ENCODE measurements at regions of chr9 and their contacts with region 1.

Region 1: DNA sequence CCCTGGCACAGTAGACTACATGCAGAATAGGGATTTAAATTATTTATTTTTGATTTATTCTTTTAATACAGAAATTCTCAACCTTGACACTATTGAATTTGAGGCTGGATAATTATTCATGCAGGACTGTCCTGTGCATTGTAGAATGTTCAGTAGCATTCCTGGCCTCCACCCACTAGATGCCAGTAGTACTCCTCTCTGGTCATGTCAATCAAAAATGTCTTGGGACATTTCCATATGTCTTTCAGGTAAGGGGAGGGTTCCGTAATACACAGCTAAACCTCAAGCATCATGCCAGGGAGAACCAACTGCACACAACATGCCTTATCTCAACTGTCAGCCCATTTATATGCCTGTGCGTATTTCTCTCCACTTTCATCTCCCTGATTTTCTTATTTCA is 231.8 kb downstream of the BRINP1 start:
- DNase-seq: no peak
- H3K4me3 ChIP-seq: no peak overlapping the region
- CTCF ChIP-seq: no peak

Region 2: DNA sequence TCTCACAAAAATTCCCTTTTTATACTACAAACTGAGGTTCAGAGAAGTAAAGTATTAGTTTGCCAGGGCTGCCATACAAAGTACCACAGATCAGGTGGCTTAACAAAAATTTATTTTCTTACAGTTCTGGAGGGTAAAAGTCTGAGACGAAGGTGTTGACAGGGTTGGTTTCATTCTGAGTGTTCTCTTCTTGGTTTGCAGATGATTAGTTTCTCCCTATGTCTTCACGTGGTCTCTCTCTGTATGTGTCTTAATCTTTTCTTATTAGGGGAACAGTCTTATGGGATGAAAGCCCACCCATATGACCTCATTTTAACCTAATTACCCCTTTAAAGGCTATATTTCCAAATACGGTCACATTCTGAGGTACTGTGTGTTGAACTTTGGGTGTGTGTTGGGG is 42.4 kb before region 1 on chr9:
- in situ Hi-C with region 1: loop called (anchors 5 kb)
- DNase-seq: no peak
- H3K4me3 ChIP-seq: no peak overlapping the region
- CTCF ChIP-seq: no peak

Measured in astrocyte of the cerebellum (primary cell).